ENCODE measurements at regions of chr21 and their contacts with region 1.

Region 1: GRCh38 chr21:16330082-16330907 is 600.5 kb downstream of the USP25 start:
- DNase-seq: peak in 2 of 4 donors; percentile 65 to 81
- ATAC-seq: peak; percentile 98
- H3K4me3 ChIP-seq: no peak overlapping the region
- H3K27ac ChIP-seq: no peak overlapping the region
- H3K4me1 ChIP-seq: no peaks in the 10 kb centered on the region
- H3K27me3 ChIP-seq: no peaks in the 10 kb centered on the region
- CTCF ChIP-seq: peak; percentile 63 to 65

Region 2: DNA sequence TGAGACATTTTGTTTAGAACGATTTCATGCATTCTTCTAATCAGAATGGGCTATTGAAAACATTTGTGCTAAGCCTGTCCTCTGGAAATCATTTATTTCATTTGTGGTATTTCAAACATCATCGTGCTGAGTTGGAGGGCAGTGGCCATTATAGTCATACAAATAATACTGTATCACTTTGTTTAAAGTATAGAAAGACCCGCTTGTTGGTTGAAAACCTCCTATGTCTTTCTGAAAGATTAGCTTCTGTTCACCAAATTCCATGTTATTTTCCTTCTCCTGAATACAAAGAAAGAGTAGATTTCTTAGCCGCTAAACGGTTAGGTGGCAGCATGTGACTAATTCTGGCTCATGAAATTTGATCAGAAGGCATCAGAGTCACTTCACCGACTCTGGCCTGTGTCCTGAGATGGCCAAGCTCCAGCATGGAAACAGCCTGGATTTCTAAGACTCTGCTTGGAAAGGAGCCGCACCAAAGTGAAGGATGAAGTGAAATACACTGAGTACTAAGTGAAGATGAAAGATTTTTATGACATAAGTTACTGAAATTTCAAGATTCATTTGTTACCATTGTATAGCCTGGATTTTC is 245.4 kb before region 1 on chr21:
- intact Hi-C with region 1: loop called in 1 of 2 experiments (anchors 5 kb)
- DNase-seq: peak in 1 of 4 donors; percentile 10
- ATAC-seq: no peak
- H3K4me3 ChIP-seq: no peak overlapping the region
- H3K27ac ChIP-seq: peak overlapping the region in 1 of 2 donors; percentile 15
- H3K4me1 ChIP-seq: no peaks in the 10 kb centered on the region
- H3K27me3 ChIP-seq: no peaks in the 10 kb centered on the region
- CTCF ChIP-seq: no peak

Region 3: DNA sequence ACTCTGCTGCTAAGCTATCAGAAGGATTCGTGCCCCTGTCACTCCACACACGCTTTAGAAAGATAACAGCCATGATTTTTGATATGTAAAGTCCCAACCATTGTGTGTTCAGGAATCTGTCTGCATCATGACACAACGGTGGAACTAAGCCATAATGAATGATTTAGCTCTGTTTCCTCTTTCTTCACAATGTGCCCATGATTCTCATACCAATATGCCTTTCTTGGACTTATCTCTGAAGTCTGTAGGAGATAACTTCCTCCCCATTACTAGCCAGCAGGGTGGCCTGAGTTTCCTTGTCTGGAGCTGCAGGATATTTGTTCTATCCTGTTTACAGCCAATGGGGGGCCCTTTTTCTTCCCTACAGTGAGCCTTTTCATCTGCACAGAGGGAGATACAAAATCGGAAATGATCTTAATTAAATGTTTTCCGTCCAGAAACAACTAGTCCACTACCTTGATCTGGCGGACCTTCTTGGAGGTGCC is 88.8 kb before region 1 on chr21:
- intact Hi-C with region 1: no loop called
- DNase-seq: no peak
- ATAC-seq: no peak
- H3K4me3 ChIP-seq: no peak overlapping the region
- H3K27ac ChIP-seq: no peak overlapping the region
- H3K4me1 ChIP-seq: no peaks in the 10 kb centered on the region
- H3K27me3 ChIP-seq: no peaks in the 10 kb centered on the region
- CTCF ChIP-seq: no peak